Head of caudate nucleus (tissue), 42 donors: ENCODE measurements at regions of chr12 and their contacts with region 1.

Region 1: DNA sequence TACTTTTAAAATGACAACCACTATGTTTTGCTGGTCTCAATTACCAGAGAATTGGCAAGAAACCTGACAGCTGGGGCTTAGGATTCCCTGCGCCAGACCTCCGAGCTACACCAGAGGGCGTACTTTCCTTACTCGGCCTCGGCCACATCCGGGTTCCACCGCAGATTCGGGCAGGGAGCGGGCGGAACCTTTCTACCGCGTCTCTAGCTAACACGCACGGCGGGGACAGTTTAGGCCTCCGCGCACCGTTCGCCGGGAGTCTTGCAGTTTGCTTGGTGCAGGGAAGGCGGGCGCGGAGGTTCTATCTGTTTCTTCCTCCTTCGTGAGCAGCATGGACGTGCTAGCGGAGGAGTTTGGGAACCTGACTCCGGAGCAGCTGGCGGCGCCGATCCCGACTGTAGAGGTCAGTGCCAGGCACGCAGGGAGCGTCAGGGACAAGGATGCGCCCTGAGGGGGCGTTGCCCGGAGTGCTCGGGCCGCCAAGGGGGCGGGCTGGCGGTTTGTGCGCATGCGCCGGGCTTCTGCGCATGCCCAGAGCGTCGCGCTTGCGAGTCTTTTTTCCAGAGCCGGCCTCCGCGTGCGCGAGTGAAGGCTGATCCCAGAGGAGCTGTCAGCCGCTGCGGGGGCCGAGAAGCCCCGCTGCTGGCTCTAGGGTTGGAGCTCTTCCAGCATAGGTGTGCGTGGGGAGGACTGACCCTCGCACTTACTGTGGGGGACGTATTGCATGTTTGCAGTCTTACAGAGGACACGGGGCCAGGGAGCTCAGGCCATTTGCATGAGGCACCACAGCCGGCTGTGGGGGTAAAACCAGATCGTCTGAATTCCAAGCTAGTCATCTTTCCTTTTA is at the start of gene POLR3B:
- DNase-seq: peak; percentile 90 to 98 (median 96)

Region 2: GRCh38 chr12:106223485-106224354 is 134.1 kb before region 1 on chr12:
- intact Hi-C with region 1: loop called (anchors 5 kb)
- DNase-seq: peak in 41 of 42 donors; percentile 8 to 86 (median 67)

Region 3: DNA sequence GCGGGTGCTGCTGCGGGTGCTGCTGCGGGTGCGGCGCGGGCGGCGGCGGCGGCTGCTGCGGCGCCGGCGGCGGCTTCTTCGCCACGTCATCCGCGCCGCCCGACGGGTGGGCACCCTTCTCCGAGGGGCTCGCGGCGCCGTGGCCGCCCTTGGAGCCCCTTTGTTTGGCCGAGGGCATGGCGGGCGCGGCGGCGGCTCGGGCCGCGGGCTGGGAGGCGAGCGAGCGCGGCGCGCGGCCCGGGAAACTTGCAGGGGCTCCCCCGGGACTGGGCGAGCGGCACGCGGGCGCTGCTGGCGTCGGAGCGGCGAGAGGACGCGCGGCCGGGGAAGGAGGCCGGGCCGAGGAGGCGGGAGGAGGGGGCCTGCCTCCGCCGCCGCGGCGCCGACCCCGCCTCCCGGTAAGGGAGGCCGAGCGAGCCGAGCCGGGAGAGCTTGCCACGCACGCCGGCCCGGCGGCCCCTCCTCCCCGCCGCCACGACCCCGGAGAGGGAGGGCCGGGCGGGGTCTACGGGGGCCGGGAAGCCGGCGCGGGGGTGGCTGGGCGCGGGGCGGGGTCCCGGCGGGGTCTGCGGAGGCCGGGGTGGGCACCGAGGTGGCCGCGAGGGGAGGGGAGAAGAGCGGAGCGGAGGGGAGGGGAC is 110.0 kb before region 1 on chr12 and contains the start of gene CKAP4:
- intact Hi-C with region 1: loop called (anchors 5 kb)
- DNase-seq: peak in 38 of 42 donors; percentile 22 to 78 (median 54)

Region 4: GRCh38 chr12:106302401-106303201 is 55.2 kb before region 1 on chr12 and contains the start of gene TCP11L2:
- intact Hi-C with region 1: loop called (anchors 2 kb)
- DNase-seq: peak; percentile 80 to 96 (median 91)